AG04450 (cell line): ENCODE measurements at regions of chr2 and their contacts with region 1.

Region 1: GRCh38 chr2:216114714-216115557 is 5.8 kb downstream of the XRCC5 start:
- DNase-seq: peak; percentile 99
- H3K4me3 ChIP-seq: peak overlapping the region; percentile 59
- H3K27ac ChIP-seq: peak overlapping the region; percentile 84
- H3K27me3 ChIP-seq: no peaks in the 10 kb centered on the region
- CTCF ChIP-seq: peak; percentile 87

Region 2: GRCh38 chr2:215430528-215431187 is 684.3 kb before region 1 on chr2:
- CTCF ChIA-PET with region 1: no interaction called
- POLR2A ChIA-PET with region 1: interaction called, 10 read pairs
- DNase-seq: no peak
- H3K4me3 ChIP-seq: peak overlapping the region; percentile 89
- H3K27ac ChIP-seq: no peak overlapping the region
- H3K27me3 ChIP-seq: no peaks in the 10 kb centered on the region
- CTCF ChIP-seq: no peak

Region 3: DNA sequence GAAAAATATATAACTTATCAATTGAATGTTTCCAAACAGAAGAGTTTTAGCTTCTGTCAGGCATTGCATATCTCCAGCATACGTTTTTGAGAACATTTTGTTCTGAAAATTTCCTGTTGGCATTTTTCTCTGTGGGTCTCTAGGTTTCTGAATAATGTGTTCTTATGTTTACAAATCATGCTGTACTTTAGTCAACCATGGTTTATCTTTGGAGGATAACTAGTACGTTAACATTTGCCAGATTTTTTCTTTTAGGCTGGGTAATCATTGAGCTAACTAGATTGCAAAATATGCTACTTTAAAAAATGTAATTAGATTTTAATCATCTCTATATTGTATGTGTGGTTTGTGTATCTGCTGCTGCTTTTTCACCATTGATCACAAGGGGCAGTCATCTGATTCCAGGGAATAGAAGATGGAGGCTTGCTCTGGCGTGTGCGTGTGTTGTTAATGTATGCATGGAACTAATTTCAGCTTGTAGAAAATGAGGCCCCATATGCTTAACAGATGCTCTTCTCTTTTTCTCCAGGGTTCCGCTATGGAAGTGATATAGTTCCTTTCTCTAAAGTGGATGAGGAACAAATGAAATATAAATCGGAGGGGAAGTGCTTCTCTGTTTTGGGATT is 15.5 kb after region 1 on chr2:
- CTCF ChIA-PET with region 1: interaction called, 28 read pairs
- POLR2A ChIA-PET with region 1: interaction called, 4 read pairs
- DNase-seq: no peak
- H3K4me3 ChIP-seq: no peak overlapping the region
- H3K27ac ChIP-seq: no peak overlapping the region
- H3K27me3 ChIP-seq: no peaks in the 10 kb centered on the region
- CTCF ChIP-seq: peak; percentile 21; the same call in 1 of the 2 replicates

Region 4: DNA sequence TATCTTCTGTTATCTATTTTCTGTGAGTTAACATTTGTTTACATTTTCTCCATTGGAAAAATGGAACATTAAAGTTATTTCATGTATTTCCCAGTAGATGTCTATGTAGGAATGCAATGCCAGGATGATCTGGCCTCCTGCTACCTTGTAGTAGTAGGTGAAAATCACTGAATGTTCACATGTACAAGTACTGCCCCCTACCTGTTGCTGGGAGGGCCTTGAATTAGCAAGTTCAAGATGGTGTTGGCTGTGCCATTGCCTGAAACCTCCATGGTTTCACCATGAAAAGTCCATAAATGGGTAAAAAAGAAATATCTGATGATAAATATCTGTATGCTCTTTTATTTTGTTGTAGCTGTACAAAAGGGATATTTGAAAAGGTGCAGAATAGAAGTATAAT is 24.9 kb after region 1 on chr2:
- CTCF ChIA-PET with region 1: interaction called, 14 read pairs
- POLR2A ChIA-PET with region 1: no interaction called
- DNase-seq: no peak
- H3K4me3 ChIP-seq: no peak overlapping the region
- H3K27ac ChIP-seq: no peak overlapping the region
- H3K27me3 ChIP-seq: no peaks in the 10 kb centered on the region
- CTCF ChIP-seq: no peak